ENCODE measurements at regions of chr10 and their contacts with region 1.

Region 1: DNA sequence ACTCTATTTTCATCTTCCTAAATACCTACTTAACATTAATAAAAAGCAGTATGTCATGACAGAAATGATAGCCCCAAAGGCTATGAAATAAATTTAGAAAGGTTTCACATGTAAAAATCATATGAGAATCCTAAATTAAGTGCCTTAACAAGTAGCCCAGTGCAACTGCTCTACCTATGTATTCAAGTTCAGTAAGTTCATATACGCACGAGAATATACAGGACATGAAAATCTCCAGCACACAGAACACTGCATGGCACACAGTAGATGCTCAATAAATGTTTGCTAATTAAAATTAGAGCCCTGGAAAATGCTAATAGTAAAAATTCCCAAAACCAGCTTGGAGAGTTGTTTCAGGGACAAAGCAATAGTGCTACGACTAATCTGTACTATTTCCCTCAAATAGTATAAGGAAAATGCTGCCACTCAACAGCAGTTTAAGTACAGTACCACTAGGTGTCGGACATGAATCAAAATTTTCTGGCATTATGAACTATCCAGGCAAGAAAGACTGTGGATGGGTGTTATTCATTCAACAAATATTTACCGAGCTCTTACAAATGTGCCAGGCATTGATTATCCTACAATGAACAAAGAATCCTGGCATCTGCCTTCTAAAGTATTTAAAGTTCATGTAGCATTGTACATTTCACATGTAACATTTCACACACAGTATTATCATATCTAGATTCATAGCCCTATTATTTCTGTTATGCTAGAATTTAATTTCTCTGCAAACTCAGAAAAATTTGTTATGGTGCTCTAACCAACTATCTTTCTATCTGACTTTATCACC is 80.9 kb downstream of the ARHGAP21 start:
- DNase-seq: no peak
- ATAC-seq: peak; percentile 82
- H3K4me3 Mint-ChIP-seq: no peak overlapping the region
- H3K27ac Mint-ChIP-seq: no peak overlapping the region
- H3K4me1 Mint-ChIP-seq: peaks cover 4% of the 10 kb centered on the region
- H3K27me3 Mint-ChIP-seq: no peaks in the 10 kb centered on the region

Region 2: GRCh38 chr10:24826019-24826418 is 183.2 kb after region 1 on chr10:
- CTCF ChIA-PET with region 1: no interaction called
- POLR2A ChIA-PET with region 1: no interaction called
- intact Hi-C with region 1: loop called in 1 of 2 experiments (anchors 10 kb)
- DNase-seq: no peak
- ATAC-seq: no peak
- H3K4me3 Mint-ChIP-seq: peak overlapping the region; percentile 29
- H3K27ac Mint-ChIP-seq: no peak overlapping the region
- H3K4me1 Mint-ChIP-seq: peaks cover 41% of the 10 kb centered on the region
- H3K27me3 Mint-ChIP-seq: no peaks in the 10 kb centered on the region

Region 3: DNA sequence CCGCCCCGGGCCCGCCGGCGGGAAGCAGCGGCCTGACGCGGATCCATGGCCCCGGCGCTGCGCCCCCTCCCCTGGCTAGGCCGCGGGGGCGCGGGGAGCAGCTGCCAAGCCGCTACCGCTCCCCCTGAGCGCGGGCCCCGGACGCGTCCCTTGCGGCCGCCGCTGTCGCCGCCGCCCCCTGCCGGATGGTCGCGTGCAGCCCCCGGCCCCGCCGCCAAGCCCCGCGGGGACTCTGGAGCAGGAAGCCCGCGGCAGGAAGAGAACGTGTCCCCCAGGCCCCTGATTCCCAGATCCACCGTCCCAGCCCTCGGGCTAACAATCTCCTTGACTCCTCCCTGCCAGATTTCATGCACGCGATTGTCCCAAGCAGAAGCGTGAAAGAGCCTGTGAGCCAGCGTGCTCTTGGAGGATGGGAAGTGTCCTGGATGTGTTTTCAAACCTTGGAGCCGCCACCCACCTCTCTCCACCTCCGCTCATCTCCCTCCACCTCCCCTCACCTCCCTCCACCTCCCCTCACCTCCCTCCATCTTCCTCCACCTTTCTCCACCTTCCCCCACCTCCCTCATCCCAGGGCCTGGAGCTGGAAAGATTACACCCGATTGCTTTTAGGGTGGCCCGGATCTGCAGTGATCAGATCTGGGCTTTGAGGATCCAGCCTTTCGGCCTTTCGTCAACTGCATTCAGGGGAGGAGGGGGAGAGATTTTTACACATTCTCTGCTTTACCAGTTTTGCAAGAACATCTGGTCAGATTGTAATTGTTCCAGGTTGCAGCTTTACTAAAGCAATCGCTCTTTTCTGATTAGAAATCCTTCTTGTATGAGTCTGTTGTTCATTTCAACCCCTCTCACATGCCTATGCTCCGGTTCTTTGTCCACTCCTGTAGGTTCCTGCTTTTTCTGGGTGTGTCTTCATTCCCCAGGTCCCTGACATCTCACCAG is 310.2 kb after region 1 on chr10:
- CTCF ChIA-PET with region 1: interaction called, 3 read pairs
- POLR2A ChIA-PET with region 1: no interaction called
- intact Hi-C with region 1: loop called (anchors 2 kb)
- DNase-seq: peak; percentile 59
- ATAC-seq: peak; percentile 69
- H3K4me3 Mint-ChIP-seq: peak overlapping the region; percentile 67
- H3K27ac Mint-ChIP-seq: no peak overlapping the region
- H3K4me1 Mint-ChIP-seq: peaks cover 17% of the 10 kb centered on the region
- H3K27me3 Mint-ChIP-seq: peaks cover 4% of the 10 kb centered on the region

Region 4: GRCh38 chr10:24989867-24990266 is 347.0 kb after region 1 on chr10:
- CTCF ChIA-PET with region 1: no interaction called
- POLR2A ChIA-PET with region 1: no interaction called
- intact Hi-C with region 1: loop called in 1 of 2 experiments (anchors 2 kb)
- DNase-seq: no peak
- ATAC-seq: no peak
- H3K4me3 Mint-ChIP-seq: no peak overlapping the region
- H3K27ac Mint-ChIP-seq: no peak overlapping the region
- H3K4me1 Mint-ChIP-seq: no peaks in the 10 kb centered on the region
- H3K27me3 Mint-ChIP-seq: peaks cover 3% of the 10 kb centered on the region

Region 5: GRCh38 chr10:25016376-25017154 is 373.7 kb after region 1 on chr10 and contains the start of gene THNSL1:
- CTCF ChIA-PET with region 1: no interaction called
- POLR2A ChIA-PET with region 1: no interaction called
- intact Hi-C with region 1: loop called in 1 of 2 experiments (anchors 10 kb)
- DNase-seq: peak; percentile 98
- ATAC-seq: peak; percentile 99
- H3K4me3 Mint-ChIP-seq: peak within 1 kb of the TSS; percentile 85
- H3K27ac Mint-ChIP-seq: peak within 1 kb of the TSS; percentile 98
- H3K4me1 Mint-ChIP-seq: peaks cover 23% of the 10 kb centered on the region
- H3K27me3 Mint-ChIP-seq: no peaks in the 10 kb centered on the region
- total RNA-seq, gene THNSL1: 8.0 to 9.5 TPM

Region 6: DNA sequence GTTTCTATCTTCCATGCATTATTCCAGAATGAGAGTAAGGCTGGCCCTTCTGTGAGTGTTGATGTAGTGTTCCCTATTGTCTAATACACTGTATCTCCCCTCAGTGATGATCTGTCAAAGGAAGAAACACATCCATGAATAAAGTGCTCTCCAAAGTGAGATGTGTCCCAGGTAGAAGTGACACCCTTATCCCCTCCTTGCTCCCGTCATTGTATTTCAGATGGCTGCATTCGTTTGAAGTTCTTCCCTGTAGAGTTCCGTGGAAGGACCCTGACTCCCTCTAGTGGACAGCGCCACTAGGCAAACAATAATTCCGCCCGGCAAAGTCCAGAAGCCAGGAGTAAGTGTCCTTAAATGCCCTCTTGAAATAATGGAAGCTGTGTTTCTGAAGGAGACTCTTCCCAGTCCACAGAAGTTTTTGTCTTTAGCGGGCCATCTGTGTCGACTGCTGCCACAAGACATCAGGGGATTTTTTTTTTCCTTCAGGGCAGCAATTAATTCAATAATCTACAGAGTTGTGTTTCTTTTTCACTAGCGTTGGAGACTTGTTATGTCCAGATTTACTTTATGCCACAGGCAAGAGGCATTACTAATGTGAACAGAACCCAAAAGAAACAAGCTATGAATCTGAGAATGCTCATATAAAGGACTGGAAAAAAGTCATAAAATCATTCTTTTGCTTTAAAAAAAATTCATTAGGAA is 438.2 kb after region 1 on chr10:
- CTCF ChIA-PET with region 1: interaction called, 5 read pairs
- POLR2A ChIA-PET with region 1: no interaction called
- intact Hi-C with region 1: loop called (anchors 1 kb)
- DNase-seq: peak; percentile 77
- ATAC-seq: peak; percentile 65
- H3K4me3 Mint-ChIP-seq: no peak overlapping the region
- H3K27ac Mint-ChIP-seq: no peak overlapping the region
- H3K4me1 Mint-ChIP-seq: peaks cover 6% of the 10 kb centered on the region
- H3K27me3 Mint-ChIP-seq: peaks cover 3% of the 10 kb centered on the region

Region 7: GRCh38 chr10:25226775-25227682 is 584.2 kb after region 1 on chr10:
- CTCF ChIA-PET with region 1: interaction called, 3 read pairs
- POLR2A ChIA-PET with region 1: no interaction called
- intact Hi-C with region 1: loop called (anchors 1 to 5 kb)
- DNase-seq: peak; percentile 48
- ATAC-seq: no peak
- H3K4me3 Mint-ChIP-seq: no peak overlapping the region
- H3K27ac Mint-ChIP-seq: no peak overlapping the region
- H3K4me1 Mint-ChIP-seq: no peaks in the 10 kb centered on the region
- H3K27me3 Mint-ChIP-seq: no peaks in the 10 kb centered on the region